ENCODE measurements at regions of chr3 and their contacts with region 1.

Region 1: DNA sequence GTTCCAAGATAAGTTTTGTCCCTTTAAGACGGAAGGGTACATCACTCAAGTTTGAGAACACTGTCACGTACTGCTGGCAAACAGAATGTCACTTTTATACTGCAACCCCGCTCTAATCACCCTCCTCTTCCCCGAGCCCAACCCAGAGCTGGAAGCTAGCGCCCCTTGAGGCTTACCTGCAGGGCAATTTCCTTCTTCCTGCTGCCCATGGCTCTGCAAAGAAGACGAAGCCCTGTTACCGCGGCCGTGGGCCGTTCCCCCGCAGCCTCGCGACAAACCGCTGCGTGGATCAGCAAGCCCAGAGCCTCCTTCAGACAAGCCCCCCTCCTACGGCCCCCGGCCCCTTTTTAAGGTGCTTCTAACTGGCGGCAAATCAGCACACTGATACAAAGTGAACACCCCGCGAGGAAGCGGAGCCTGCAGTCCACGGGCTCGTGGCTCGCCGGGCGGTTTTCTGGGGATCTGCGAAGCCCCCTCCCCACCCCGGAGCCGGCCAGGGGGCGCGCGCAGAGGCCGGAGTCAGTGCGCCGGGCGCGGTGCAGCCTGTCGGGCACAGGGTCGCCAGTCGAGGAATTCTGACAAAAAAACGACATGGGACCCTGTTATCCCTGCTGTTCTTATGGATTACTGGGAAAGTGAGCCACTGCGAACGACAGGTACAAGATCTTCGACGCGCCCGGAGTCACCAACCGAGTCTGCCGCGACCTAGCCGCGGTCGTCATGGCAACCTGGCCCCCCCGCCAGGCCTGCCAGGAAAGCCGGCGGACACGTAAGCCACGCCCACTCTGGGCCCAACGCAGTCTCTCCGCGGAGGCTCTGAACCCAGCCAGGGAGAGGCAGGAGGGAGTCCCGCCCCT is at the start of gene NME9:
- DNase-seq: peak; percentile 87
- ATAC-seq: peak; percentile 97
- H3K4me3 ChIP-seq: peak within 1 kb of the TSS; percentile 60 to 71 (median 64)
- H3K27ac ChIP-seq: no peak within 1 kb of the TSS
- H3K4me1 ChIP-seq: peaks cover 14% of the 10 kb centered on the region
- H3K27me3 ChIP-seq: no peaks in the 10 kb centered on the region
- CTCF ChIP-seq: peak; percentile 77
- EP300 ChIP-seq: no peak
- POLR2A ChIP-seq: no peak
- RAD21 ChIP-seq: 0 out of 2 replicates have a peak, but pooled peaks have one; percentile 17
- total RNA-seq, gene NME9: not detected in 2 replicates

Region 2: DNA sequence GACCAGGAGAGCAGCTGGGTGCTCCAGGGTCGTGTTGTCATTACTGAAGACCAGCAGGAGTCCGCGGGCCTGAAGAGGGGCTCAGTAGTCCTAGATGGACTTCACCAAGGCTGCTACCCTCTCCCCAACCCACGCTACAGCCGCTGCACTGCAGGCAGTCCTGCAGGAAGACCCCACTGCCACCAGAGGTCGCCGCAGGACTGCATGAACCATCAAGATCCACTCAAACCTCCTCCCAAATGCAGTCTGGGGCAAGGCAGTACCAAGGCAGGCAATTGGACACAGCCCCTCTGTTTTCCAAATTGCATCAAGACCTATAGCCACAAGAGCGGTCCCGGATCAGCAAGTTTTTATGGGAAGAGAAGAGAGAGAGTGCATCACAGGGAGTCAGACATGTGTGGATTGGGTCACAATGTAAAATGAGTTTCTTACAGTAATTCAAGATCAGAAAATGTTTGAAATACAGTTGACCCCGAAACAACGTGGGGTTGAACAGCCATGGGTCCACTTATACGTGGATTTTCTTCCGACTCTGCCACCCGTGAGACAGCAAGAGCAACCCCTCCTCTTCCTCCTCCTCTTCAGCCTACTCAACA is 260.7 kb before region 1 on chr3:
- CTCF ChIA-PET with region 1: no interaction called
- POLR2A ChIA-PET with region 1: no interaction called
- in situ Hi-C with region 1: no loop called
- intact Hi-C with region 1: loop called (anchors 1 kb)
- DNase-seq: peak; percentile 53
- ATAC-seq: peak; percentile 95
- H3K4me3 ChIP-seq: no peak overlapping the region
- H3K27ac ChIP-seq: no peak overlapping the region
- H3K4me1 ChIP-seq: no peaks in the 10 kb centered on the region
- H3K27me3 ChIP-seq: no peaks in the 10 kb centered on the region
- CTCF ChIP-seq: peak; percentile 98
- EP300 ChIP-seq: no peak
- POLR2A ChIP-seq: no peak
- RAD21 ChIP-seq: peak; percentile 91

Region 3: DNA sequence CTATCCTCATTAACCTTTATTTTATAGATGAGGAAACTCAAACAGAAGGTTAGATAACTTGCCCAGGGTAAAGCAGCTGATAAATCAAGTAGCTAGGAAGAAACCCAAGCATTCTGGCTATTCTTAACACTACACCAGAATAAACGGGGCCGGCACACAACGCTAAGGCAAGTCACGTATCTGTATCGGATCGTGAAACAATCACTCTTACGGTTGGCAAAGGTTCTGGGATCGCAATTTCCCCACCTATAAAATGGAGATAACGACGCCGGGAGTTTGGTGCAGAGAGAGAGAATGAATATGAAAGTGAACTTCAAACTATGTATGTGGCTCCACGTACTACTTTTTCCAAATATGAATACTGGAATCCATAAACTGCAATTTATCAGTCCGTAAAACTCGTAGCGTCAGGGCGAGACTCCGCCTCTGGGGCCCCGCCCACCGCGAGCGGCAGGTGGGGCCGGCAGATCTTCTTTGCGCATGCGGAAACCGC is 142.5 kb before region 1 on chr3:
- CTCF ChIA-PET with region 1: no interaction called
- POLR2A ChIA-PET with region 1: no interaction called
- in situ Hi-C with region 1: loop called (anchors 10 kb)
- intact Hi-C with region 1: no loop called
- DNase-seq: no peak
- ATAC-seq: peak; percentile 31
- H3K4me3 ChIP-seq: peak overlapping the region; percentile 87 to 97 (median 91)
- H3K27ac ChIP-seq: peak overlapping the region; percentile 97
- H3K4me1 ChIP-seq: peaks cover 53% of the 10 kb centered on the region
- H3K27me3 ChIP-seq: peaks cover 0 to 4% of the 10 kb centered on the region in 2 experiments; a peak in 3 of 5 replicates
- CTCF ChIP-seq: no peak
- EP300 ChIP-seq: no peak
- POLR2A ChIP-seq: no peak
- RAD21 ChIP-seq: no peak

Region 4: GRCh38 chr3:138347960-138348753 is 18.8 kb after region 1 on chr3 and contains the start of gene MRAS:
- CTCF ChIA-PET with region 1: interaction called, 9 read pairs
- POLR2A ChIA-PET with region 1: interaction called, 3 read pairs
- in situ Hi-C with region 1: no loop called
- intact Hi-C with region 1: loop called (anchors 2 kb)
- DNase-seq: peak; percentile 59
- ATAC-seq: peak; percentile 78
- H3K4me3 ChIP-seq: peak within 1 kb of the TSS; percentile 77 to 86 (median 85)
- H3K27ac ChIP-seq: peak within 1 kb of the TSS; percentile 77
- H3K4me1 ChIP-seq: peaks cover 50% of the 10 kb centered on the region
- H3K27me3 ChIP-seq: no peaks in the 10 kb centered on the region
- CTCF ChIP-seq: peak; percentile 73
- EP300 ChIP-seq: 0 out of 4 replicates have a peak, but pooled peaks of 1 of the 2 experiments have one; percentile 8
- POLR2A ChIP-seq: no peak; a peak in 2 of 4 replicates
- RAD21 ChIP-seq: peak; percentile 83
- total RNA-seq, gene MRAS: 36.2 TPM in 2 replicates

Region 5: GRCh38 chr3:138417559-138417982 is 88.2 kb after region 1 on chr3:
- CTCF ChIA-PET with region 1: interaction called, 5 read pairs
- POLR2A ChIA-PET with region 1: no interaction called
- in situ Hi-C with region 1: no loop called
- intact Hi-C with region 1: loop called (anchors 1 kb)
- DNase-seq: peak; percentile 82
- ATAC-seq: peak; percentile 98
- H3K4me3 ChIP-seq: no peak overlapping the region
- H3K27ac ChIP-seq: no peak overlapping the region
- H3K4me1 ChIP-seq: peaks cover 9% of the 10 kb centered on the region; the same call in 1 of the 2 replicates
- H3K27me3 ChIP-seq: no peaks in the 10 kb centered on the region
- CTCF ChIP-seq: peak; percentile 93
- EP300 ChIP-seq: no peak
- POLR2A ChIP-seq: no peak
- RAD21 ChIP-seq: peak; percentile 86

Measured in HepG2 (cell line).